ENCODE measurements at regions of chr12 and their contacts with region 1.

Region 1: GRCh38 chr12:9813821-9814809 is 13.2 kb upstream of the KLRF1 start:
- DNase-seq: peak; percentile 94
- ATAC-seq: peak; percentile 82

Region 2: GRCh38 chr12:9214536-9214935 is 599.6 kb before region 1 on chr12:
- intact Hi-C with region 1: no loop called
- DNase-seq: no peak
- ATAC-seq: no peak

Region 3: GRCh38 chr12:9843416-9843815 is 29.3 kb after region 1 on chr12:
- intact Hi-C with region 1: no loop called
- DNase-seq: no peak
- ATAC-seq: no peak

Region 4: GRCh38 chr12:9925708-9926393 is 111.7 kb after region 1 on chr12:
- intact Hi-C with region 1: loop called (anchors 5 kb)
- DNase-seq: no peak
- ATAC-seq: peak; percentile 23